ENCODE measurements at regions of chr13 and their contacts with region 1.

Region 1: DNA sequence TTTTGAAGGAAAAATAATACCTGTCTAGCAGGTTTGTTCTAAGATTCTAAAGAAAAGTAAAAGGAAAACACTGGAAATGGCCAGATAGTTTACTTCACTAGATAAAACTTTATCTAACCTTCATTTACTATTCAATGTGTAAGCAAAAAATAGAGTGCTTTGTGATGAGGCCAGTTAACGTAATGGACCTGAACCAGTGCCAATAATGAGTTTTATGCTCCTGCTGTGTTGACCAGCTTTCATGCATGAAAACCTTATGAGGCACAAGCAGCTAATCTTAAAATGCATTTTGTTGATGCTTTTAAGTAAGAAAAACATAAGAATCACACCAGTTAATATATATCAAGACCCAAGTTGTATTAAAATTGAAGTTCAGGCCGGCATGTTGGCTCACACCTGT is 617.2 kb upstream of the GPC6 start:
- DNase-seq: no peak

Region 2: GRCh38 chr13:92591117-92591516 is 18.3 kb before region 1 on chr13:
- intact Hi-C with region 1: no loop called
- DNase-seq: no peak

Region 3: GRCh38 chr13:92671821-92672220 is 62.4 kb after region 1 on chr13:
- intact Hi-C with region 1: loop called in 1 of 2 experiments (anchors 2 kb)
- DNase-seq: no peak

Measured in posterior vena cava (tissue), 2 donors.